Calu3 (cell line): ENCODE measurements at regions of chr20 and their contacts with region 1.

Region 1: DNA sequence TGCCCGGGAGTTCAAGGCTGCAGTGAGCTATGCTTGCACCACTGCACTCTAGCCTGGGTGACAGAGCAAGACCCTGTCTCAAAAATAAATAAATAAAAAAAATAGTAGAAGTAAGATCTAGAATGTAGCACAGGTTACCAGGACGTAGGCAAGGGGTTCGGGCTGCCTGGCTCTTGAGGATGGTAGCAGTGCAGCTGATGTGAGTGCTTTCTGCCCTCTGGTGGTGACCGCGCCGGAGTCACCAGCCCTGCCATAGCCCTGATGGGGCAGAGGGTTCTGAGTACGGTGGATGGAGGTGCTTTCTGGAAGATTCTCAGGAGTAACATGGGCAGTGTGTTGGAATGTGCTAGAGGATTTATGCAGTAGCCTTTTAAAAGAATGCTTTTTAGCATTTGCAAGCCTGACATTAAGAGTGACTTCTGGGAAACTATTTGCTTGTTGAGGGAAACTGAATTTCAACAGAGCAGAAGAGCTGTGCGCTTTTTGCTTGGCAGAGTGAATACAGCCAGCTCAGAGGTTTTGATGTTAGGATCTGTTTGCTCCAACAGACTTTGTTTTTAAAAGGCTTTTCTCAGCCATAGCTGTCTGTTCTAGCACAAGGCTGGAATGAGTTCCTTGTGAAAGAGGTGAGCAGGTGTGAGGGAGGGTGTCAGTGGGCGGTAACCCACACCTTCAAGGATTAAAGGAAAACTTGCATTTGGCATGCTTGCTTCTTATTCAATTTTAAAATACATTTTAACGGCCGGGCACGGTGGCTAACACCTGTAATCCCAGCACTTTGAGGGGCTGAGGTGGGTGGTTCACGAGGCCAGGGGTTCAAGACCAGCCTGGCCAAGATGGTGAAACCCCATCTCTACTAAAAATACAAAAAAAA is 65.9 kb downstream of the PTPN1 start:
- DNase-seq: peak; percentile 86
- H3K4me3 Mint-ChIP-seq: no peak overlapping the region
- H3K27ac Mint-ChIP-seq: no peak overlapping the region
- H3K4me1 Mint-ChIP-seq: peaks cover 19% of the 10 kb centered on the region
- H3K27me3 Mint-ChIP-seq: no peaks in the 10 kb centered on the region
- CTCF ChIP-seq: peak; percentile 92

Region 2: GRCh38 chr20:50471204-50471610 is 104.9 kb before region 1 on chr20:
- CTCF ChIA-PET with region 1: interaction called, 5 read pairs
- intact Hi-C with region 1: loop called (anchors 2 kb)
- DNase-seq: peak; percentile 50
- H3K4me3 Mint-ChIP-seq: no peak overlapping the region
- H3K27ac Mint-ChIP-seq: peak overlapping the region; percentile 42
- H3K4me1 Mint-ChIP-seq: peaks cover 48% of the 10 kb centered on the region
- H3K27me3 Mint-ChIP-seq: no peaks in the 10 kb centered on the region
- CTCF ChIP-seq: no peak

Region 3: GRCh38 chr20:50491926-50492634 is 84.0 kb before region 1 on chr20:
- CTCF ChIA-PET with region 1: interaction called, 3 read pairs
- intact Hi-C with region 1: loop called (anchors 5 kb)
- DNase-seq: no peak
- H3K4me3 Mint-ChIP-seq: no peak overlapping the region
- H3K27ac Mint-ChIP-seq: peak overlapping the region; percentile 69
- H3K4me1 Mint-ChIP-seq: peaks cover 29% of the 10 kb centered on the region
- H3K27me3 Mint-ChIP-seq: no peaks in the 10 kb centered on the region
- CTCF ChIP-seq: no peak

Region 4: GRCh38 chr20:50509935-50510705 is 66.0 kb before region 1 on chr20 and contains the start of gene PTPN1:
- CTCF ChIA-PET with region 1: interaction called, 6 read pairs
- intact Hi-C with region 1: loop called (anchors 1 kb)
- DNase-seq: peak; percentile 100
- H3K4me3 Mint-ChIP-seq: peak within 1 kb of the TSS; percentile 90
- H3K27ac Mint-ChIP-seq: peak within 1 kb of the TSS; percentile 88
- H3K4me1 Mint-ChIP-seq: peaks cover 38% of the 10 kb centered on the region
- H3K27me3 Mint-ChIP-seq: no peaks in the 10 kb centered on the region
- CTCF ChIP-seq: peak; percentile 7
- total RNA-seq, gene PTPN1: 58.5 and 67.5 TPM in 2 replicates

Region 5: GRCh38 chr20:50618537-50618936 is 42.5 kb after region 1 on chr20:
- CTCF ChIA-PET with region 1: no interaction called
- intact Hi-C with region 1: no loop called
- DNase-seq: no peak
- H3K4me3 Mint-ChIP-seq: no peak overlapping the region
- H3K27ac Mint-ChIP-seq: peak overlapping the region; percentile 32
- H3K4me1 Mint-ChIP-seq: peaks cover 13% of the 10 kb centered on the region
- H3K27me3 Mint-ChIP-seq: no peaks in the 10 kb centered on the region
- CTCF ChIP-seq: no peak